B cell (primary cell): ENCODE measurements at regions of chr6 and their contacts with region 1.

Region 1: DNA sequence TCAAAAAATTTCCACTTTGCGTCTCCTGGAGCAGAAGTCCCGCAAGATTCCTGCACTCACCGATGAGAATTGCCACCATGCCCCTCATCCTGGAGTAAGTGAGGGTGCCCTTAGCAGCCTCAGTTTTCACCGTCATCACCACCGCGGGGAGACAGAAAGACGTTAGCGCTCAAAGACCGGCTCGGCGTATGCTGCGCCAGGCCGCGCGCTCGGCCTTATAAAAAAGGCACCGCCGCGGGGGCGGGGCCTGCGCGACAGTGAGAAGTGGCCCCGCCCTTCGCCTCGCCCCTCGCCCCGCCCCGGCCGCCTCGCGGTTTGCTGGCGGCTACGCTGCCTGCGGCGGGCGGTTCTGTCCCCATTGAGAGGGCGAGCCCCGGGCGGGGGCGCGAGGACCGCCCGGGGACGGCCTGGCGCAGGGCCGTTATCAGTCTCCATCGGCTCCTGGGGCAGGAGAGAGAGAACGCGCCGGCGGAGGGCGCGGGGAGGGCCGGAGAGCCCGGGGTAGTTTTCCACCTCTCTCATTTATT is 122.3 kb upstream of the SLC2A12 start:
- DNase-seq: peak; percentile 95
- ATAC-seq: peak; percentile 89
- H3K4me3 ChIP-seq: peak overlapping the region; percentile 75 to 97 (median 77)
- H3K4me3 Mint-ChIP-seq: peak overlapping the region; percentile 95
- H3K27ac ChIP-seq: peak overlapping the region; percentile 69 to 70
- H3K27ac Mint-ChIP-seq: peak overlapping the region; percentile 92
- H3K4me1 ChIP-seq: peaks cover 29 to 33% of the 10 kb centered on the region in 2 donors
- H3K4me1 Mint-ChIP-seq: peaks cover 46% of the 10 kb centered on the region
- H3K27me3 ChIP-seq: no peaks in the 10 kb centered on the region
- H3K27me3 Mint-ChIP-seq: peaks cover 12% of the 10 kb centered on the region
- CTCF ChIP-seq: no peak

Region 2: GRCh38 chr6:133952815-133953633 is 221.7 kb before region 1 on chr6 and contains the start of gene TBPL1:
- CTCF ChIA-PET with region 1: no interaction called
- POLR2A ChIA-PET with region 1: no interaction called
- intact Hi-C with region 1: loop called (anchors 1 kb)
- DNase-seq: peak; percentile 97
- ATAC-seq: peak; percentile 78
- H3K4me3 ChIP-seq: peak within 1 kb of the TSS; percentile 78 to 98 (median 94)
- H3K4me3 Mint-ChIP-seq: peak within 1 kb of the TSS; percentile 98
- H3K27ac ChIP-seq: peak within 1 kb of the TSS; percentile 83 to 89
- H3K27ac Mint-ChIP-seq: peak within 1 kb of the TSS; percentile 97
- H3K4me1 ChIP-seq: peaks cover 20 to 27% of the 10 kb centered on the region in 2 donors
- H3K4me1 Mint-ChIP-seq: peaks cover 48% of the 10 kb centered on the region
- H3K27me3 ChIP-seq: no peaks in the 10 kb centered on the region
- H3K27me3 Mint-ChIP-seq: no peaks in the 10 kb centered on the region
- CTCF ChIP-seq: no peak
- total RNA-seq, gene TBPL1: 26.9 and 29.6 TPM in 2 replicates

Region 3: DNA sequence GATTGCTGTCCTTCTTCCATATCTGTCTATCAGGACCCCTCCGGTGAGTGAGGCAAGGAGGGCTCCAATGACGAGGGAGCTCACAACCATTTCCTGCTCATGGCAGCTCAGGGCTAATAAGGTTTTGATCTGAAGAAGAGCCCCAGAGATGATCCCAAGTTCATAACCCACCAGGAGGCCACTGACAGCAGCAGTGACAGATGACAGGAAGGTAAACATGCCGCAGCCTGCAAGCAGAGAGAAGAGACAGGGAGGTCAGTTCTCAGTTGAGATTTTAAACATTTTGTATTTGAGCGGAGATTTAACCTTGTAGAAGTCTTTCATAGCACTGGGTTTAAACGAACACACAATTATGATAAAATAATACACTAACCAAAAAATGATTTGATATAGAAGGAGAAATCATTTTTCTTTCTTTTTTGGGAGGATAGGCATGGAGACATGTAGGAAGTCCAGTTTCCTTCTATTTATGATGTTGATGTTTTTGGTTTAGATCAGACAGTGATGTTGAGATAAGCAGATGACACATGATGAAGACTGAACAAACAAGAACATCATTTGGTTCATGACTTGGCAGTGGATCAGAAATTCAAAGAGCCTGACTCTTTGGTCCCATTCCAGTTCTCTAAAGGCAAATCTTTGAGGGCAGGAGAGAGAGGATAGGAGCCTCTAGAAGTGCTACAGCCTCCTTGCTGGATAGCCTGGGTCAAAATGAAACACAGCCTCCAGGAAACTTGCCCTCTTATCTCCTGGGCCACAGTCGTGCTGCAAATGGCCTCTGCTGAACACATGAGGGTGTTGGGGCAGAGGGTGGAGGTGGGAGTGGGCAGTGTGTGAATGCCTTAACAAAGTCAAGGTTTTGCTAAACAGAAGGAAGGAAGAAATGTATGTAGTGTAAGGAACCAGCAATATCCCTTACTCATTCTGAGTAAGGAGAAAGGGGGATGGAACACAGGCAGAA is 145.0 kb before region 1 on chr6:
- CTCF ChIA-PET with region 1: no interaction called
- POLR2A ChIA-PET with region 1: no interaction called
- intact Hi-C with region 1: no loop called
- DNase-seq: no peak
- ATAC-seq: no peak
- H3K4me3 ChIP-seq: no peak overlapping the region
- H3K4me3 Mint-ChIP-seq: no peak overlapping the region
- H3K27ac ChIP-seq: no peak overlapping the region
- H3K27ac Mint-ChIP-seq: no peak overlapping the region
- H3K4me1 ChIP-seq: no peaks in the 10 kb centered on the region
- H3K4me1 Mint-ChIP-seq: no peaks in the 10 kb centered on the region
- H3K27me3 ChIP-seq: peaks cover 0 to 7% (median 3%) of the 10 kb centered on the region in 4 experiments
- H3K27me3 Mint-ChIP-seq: peaks cover 13% of the 10 kb centered on the region
- CTCF ChIP-seq: no peak

Region 4: GRCh38 chr6:134235937-134236751 is 61.4 kb after region 1 on chr6:
- CTCF ChIA-PET with region 1: interaction called, 6 read pairs
- POLR2A ChIA-PET with region 1: no interaction called
- intact Hi-C with region 1: loop called (anchors 1 kb)
- DNase-seq: peak; percentile 87
- ATAC-seq: peak; percentile 84
- H3K4me3 ChIP-seq: peak overlapping the region in 1 of 5 experiments; percentile 10
- H3K4me3 Mint-ChIP-seq: peak overlapping the region; percentile 52
- H3K27ac ChIP-seq: peak overlapping the region; percentile 94 to 97
- H3K27ac Mint-ChIP-seq: peak overlapping the region; percentile 93
- H3K4me1 ChIP-seq: peaks cover 42 to 47% of the 10 kb centered on the region in 2 donors
- H3K4me1 Mint-ChIP-seq: peaks cover 46% of the 10 kb centered on the region
- H3K27me3 ChIP-seq: no peaks in the 10 kb centered on the region
- H3K27me3 Mint-ChIP-seq: no peaks in the 10 kb centered on the region
- CTCF ChIP-seq: no peak

Region 5: DNA sequence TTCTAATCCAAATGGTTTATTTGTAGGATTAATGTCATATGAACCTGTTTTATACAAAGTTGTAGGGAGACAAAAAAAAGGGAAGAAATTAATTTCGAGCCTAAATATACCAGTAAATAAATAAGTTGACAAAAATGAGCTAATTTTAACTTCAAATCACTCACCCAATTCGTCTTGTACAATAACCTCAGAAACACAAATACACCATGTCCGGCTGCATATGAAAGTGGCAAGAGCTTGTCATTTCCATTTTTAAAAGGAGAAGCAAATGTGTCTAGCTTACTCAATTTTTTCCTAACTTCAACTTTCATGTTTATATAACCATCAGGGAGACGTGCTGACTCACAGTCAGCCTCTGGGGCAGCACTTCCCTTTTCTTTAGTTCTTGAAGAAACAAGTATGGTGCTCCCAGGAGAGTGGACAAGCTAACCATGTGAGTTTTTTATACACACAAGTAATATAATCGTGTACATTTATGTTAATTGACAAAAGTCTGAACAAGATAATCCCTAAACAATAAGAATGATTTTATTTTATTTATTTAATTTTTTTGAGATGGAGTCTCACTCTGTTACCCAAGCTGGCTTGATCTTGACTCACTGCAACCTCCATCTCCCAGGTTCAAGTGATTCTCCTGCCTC is 198.7 kb after region 1 on chr6:
- CTCF ChIA-PET with region 1: interaction called, 16 read pairs
- POLR2A ChIA-PET with region 1: no interaction called
- intact Hi-C with region 1: loop called (anchors 1 kb)
- DNase-seq: peak; percentile 68
- ATAC-seq: peak; percentile 93
- H3K4me3 ChIP-seq: peak overlapping the region in 1 of 5 experiments; percentile 8
- H3K4me3 Mint-ChIP-seq: peak overlapping the region; percentile 3
- H3K27ac ChIP-seq: no peak overlapping the region
- H3K27ac Mint-ChIP-seq: peak overlapping the region; percentile 22
- H3K4me1 ChIP-seq: peaks cover 10 to 14% of the 10 kb centered on the region in 2 donors
- H3K4me1 Mint-ChIP-seq: peaks cover 23% of the 10 kb centered on the region
- H3K27me3 ChIP-seq: no peaks in the 10 kb centered on the region
- H3K27me3 Mint-ChIP-seq: no peaks in the 10 kb centered on the region
- CTCF ChIP-seq: no peak

Region 6: GRCh38 chr6:134822920-134823709 is 648.4 kb after region 1 on chr6:
- CTCF ChIA-PET with region 1: interaction called, 35 read pairs
- POLR2A ChIA-PET with region 1: no interaction called
- intact Hi-C with region 1: no loop called
- DNase-seq: peak; percentile 72
- ATAC-seq: peak; percentile 74
- H3K4me3 ChIP-seq: no peak overlapping the region
- H3K4me3 Mint-ChIP-seq: no peak overlapping the region
- H3K27ac ChIP-seq: no peak overlapping the region
- H3K27ac Mint-ChIP-seq: no peak overlapping the region
- H3K4me1 ChIP-seq: no peaks in the 10 kb centered on the region
- H3K4me1 Mint-ChIP-seq: peaks cover 9% of the 10 kb centered on the region
- H3K27me3 ChIP-seq: no peaks in the 10 kb centered on the region
- H3K27me3 Mint-ChIP-seq: peaks cover 3% of the 10 kb centered on the region
- CTCF ChIP-seq: peak; percentile 77

Region 7: DNA sequence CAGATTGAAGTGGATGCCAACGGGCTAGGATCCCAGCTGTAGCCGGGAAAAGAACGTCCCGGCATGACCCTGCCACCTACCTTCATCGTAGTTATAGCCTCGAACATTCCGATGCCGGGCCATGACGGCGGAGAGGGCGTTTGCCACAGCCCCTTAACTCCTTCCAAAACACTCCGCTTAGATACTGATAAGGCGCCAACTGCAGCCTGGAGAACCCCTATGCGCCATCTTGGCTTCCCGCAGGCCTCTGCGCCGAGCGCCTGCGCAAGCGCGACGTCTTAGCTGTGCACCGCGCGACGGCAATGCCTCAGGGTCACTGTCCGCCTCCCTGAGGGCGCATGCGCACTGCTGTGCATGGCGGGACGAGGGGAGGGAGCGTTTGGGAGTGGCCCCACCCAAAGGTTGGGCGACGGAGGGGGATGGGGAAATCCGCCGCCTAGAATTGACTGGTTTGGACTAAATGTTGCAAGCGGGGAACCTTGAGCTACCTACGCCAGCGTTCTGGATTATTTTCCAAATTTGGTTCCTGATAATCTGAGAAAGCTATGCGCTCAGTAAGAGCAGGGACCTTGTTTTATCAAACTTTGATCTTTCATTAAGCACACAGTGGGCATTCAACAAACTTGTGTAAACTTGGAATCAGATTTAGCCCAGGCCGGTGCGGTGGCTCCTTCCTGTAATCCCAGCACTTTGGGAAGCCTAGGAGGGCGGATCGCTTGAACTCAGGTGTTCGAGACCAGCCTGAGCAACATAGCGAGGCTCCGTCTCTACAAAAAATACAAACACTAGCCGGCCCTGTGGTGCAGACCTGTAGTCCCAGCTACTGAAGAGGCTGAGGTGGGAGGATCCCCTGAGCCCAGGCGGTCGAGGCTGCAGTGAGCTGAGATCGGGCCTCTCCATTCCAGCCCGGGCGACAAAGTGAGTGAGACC is 880.1 kb after region 1 on chr6 and contains the start of gene HBS1L:
- CTCF ChIA-PET with region 1: no interaction called
- POLR2A ChIA-PET with region 1: no interaction called
- intact Hi-C with region 1: loop called (anchors 5 kb)
- DNase-seq: peak; percentile 99
- ATAC-seq: peak; percentile 98
- H3K4me3 ChIP-seq: peak within 1 kb of the TSS; percentile 68 to 98 (median 91)
- H3K4me3 Mint-ChIP-seq: peak within 1 kb of the TSS; percentile 95
- H3K27ac ChIP-seq: peak within 1 kb of the TSS; percentile 80 to 95
- H3K27ac Mint-ChIP-seq: peak within 1 kb of the TSS; percentile 95
- H3K4me1 ChIP-seq: peaks cover 16 to 19% of the 10 kb centered on the region in 2 donors
- H3K4me1 Mint-ChIP-seq: peaks cover 34% of the 10 kb centered on the region
- H3K27me3 ChIP-seq: no peaks in the 10 kb centered on the region
- H3K27me3 Mint-ChIP-seq: no peaks in the 10 kb centered on the region
- CTCF ChIP-seq: no peak
- total RNA-seq, gene HBS1L: 58.2 and 58.9 TPM in 2 replicates